ENCODE measurements at regions of chr15 and their contacts with region 1.

Region 1: GRCh38 chr15:72272213-72273002 is at the start of gene PARP6:
- DNase-seq: peak; percentile 99
- H3K4me3 ChIP-seq: peak within 1 kb of the TSS; percentile 72 to 90 (median 82)
- H3K27ac ChIP-seq: peak within 1 kb of the TSS; percentile 83 to 95 (median 90)
- H3K4me1 ChIP-seq: peaks cover 0 to 28% (median 22%) of the 10 kb centered on the region in 4 donors
- H3K27me3 ChIP-seq: no peaks in the 10 kb centered on the region
- CTCF ChIP-seq: peak; percentile 46 to 66 (median 60)
- EP300 ChIP-seq: peak in 1 of 4 donors; percentile 67
- POLR2A ChIP-seq: peak; percentile 13 to 17
- total RNA-seq, gene PARP6: 41.5 to 103 (median 60.0) TPM

Region 2: GRCh38 chr15:72117486-72118399 is 154.7 kb before region 1 on chr15 and contains the start of gene MYO9A:
- intact Hi-C with region 1: loop called (anchors 5 kb)
- DNase-seq: peak; percentile 98
- H3K4me3 ChIP-seq: peak within 1 kb of the TSS; percentile 71 to 93 (median 80)
- H3K27ac ChIP-seq: peak within 1 kb of the TSS; percentile 92 to 98 (median 94)
- H3K4me1 ChIP-seq: peaks cover 0 to 48% (median 39%) of the 10 kb centered on the region in 4 donors
- H3K27me3 ChIP-seq: no peaks in the 10 kb centered on the region
- CTCF ChIP-seq: no peak
- EP300 ChIP-seq: peak in 1 of 4 donors; percentile 10
- POLR2A ChIP-seq: peak in 1 of 2 donors; percentile 49
- total RNA-seq, gene MYO9A: 55.8 to 80.0 (median 62.8) TPM

Region 3: GRCh38 chr15:72199711-72200212 is 72.6 kb before region 1 on chr15:
- intact Hi-C with region 1: loop called (anchors 2 kb)
- DNase-seq: peak; percentile 85
- H3K4me3 ChIP-seq: no peak overlapping the region
- H3K27ac ChIP-seq: peak overlapping the region in 1 of 4 donors; percentile 41
- H3K4me1 ChIP-seq: peaks cover 0 to 25% (median 24%) of the 10 kb centered on the region in 4 donors
- H3K27me3 ChIP-seq: peaks cover 0 to 36% (median 16%) of the 10 kb centered on the region in 3 donors
- CTCF ChIP-seq: peak; percentile 57 to 91 (median 90)
- EP300 ChIP-seq: no peak
- POLR2A ChIP-seq: no peak

Region 4: GRCh38 chr15:72231066-72231846 is 41.2 kb before region 1 on chr15 and contains the start of gene PKM:
- intact Hi-C with region 1: loop called (anchors 2 kb)
- DNase-seq: peak; percentile 97
- H3K4me3 ChIP-seq: peak within 1 kb of the TSS; percentile 47 to 90 (median 68)
- H3K27ac ChIP-seq: peak within 1 kb of the TSS; percentile 92 to 99 (median 96)
- H3K4me1 ChIP-seq: peaks cover 0 to 48% (median 42%) of the 10 kb centered on the region in 4 donors
- H3K27me3 ChIP-seq: no peaks in the 10 kb centered on the region
- CTCF ChIP-seq: no peak
- EP300 ChIP-seq: no peak
- POLR2A ChIP-seq: peak; percentile 93 to 95
- total RNA-seq, gene PKM: 135 to 213 (median 200) TPM

Region 5: DNA sequence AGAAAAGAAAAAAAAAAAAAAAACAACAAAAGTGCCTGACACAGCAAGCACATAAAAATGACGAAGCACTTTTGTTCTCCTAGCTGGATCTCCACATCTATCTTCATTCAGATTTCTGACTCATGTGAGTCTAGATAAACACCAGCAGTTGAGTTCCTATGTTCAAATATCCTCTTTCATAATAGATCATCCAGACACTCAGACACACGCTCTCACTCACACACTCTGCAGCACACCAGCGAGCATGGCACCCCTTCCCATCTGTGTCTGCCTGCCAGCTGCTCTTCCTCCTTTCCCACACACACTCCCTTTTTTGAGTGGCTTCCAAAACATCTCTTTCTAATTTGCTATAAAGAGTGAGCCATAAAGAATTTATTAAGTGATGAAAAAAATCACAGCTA is 67.4 kb after region 1 on chr15:
- intact Hi-C with region 1: loop called (anchors 2 kb)
- DNase-seq: no peak
- H3K4me3 ChIP-seq: no peak overlapping the region
- H3K27ac ChIP-seq: peak overlapping the region; percentile 70 to 84 (median 78)
- H3K4me1 ChIP-seq: peaks cover 0 to 21% (median 19%) of the 10 kb centered on the region in 4 donors
- H3K27me3 ChIP-seq: no peaks in the 10 kb centered on the region
- CTCF ChIP-seq: no peak
- EP300 ChIP-seq: peak in 3 of 4 donors; percentile 40 to 51 (median 43)
- POLR2A ChIP-seq: no peak

Region 6: DNA sequence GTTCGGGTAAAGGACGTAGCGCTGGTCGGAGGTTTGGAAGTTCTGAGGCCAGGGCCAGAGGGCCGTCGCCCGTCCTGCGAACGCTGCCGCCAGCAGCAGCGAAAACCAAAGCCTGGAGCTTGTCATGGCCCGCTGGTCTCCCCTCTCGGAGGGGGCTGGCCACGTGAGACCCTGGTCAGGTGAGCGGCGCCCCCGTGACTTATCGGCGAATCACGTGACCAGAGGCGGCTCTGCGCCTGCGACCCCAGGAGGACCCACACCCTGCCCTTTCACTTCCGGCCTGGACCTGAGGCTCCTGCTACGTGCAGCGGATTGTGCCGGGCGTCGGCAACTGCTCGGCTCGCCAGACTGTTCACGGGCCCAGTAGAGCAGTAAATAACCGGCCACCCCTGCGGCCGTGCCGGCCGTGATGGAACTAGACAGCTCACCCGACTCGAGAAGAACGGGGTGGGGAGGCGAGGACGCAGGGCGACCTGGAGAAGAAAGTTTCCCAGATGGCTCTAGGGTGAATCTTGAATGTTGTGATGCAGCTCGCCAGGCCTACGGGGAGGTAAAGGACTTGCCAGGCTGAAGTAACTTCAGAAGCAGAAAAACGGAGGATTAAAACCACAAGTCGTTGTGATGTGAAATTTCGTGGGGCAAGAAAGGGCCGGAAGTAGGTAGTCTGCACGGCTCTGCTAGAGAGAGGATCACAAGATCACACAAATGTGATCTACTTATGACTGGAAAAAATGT is 103.6 kb after region 1 on chr15 and contains the start of gene HEXA:
- intact Hi-C with region 1: loop called (anchors 2 kb)
- DNase-seq: peak; percentile 99
- H3K4me3 ChIP-seq: peak within 1 kb of the TSS; percentile 70 to 85 (median 78)
- H3K27ac ChIP-seq: peak within 1 kb of the TSS; percentile 82 to 86 (median 84)
- H3K4me1 ChIP-seq: peaks cover 0 to 33% (median 24%) of the 10 kb centered on the region in 4 donors
- H3K27me3 ChIP-seq: no peaks in the 10 kb centered on the region
- CTCF ChIP-seq: no peak
- EP300 ChIP-seq: peak in 2 of 4 donors; percentile 52 to 79
- POLR2A ChIP-seq: peak; percentile 59 to 74
- total RNA-seq, gene HEXA: 56.0 to 80.0 (median 66.7) TPM

Region 7: DNA sequence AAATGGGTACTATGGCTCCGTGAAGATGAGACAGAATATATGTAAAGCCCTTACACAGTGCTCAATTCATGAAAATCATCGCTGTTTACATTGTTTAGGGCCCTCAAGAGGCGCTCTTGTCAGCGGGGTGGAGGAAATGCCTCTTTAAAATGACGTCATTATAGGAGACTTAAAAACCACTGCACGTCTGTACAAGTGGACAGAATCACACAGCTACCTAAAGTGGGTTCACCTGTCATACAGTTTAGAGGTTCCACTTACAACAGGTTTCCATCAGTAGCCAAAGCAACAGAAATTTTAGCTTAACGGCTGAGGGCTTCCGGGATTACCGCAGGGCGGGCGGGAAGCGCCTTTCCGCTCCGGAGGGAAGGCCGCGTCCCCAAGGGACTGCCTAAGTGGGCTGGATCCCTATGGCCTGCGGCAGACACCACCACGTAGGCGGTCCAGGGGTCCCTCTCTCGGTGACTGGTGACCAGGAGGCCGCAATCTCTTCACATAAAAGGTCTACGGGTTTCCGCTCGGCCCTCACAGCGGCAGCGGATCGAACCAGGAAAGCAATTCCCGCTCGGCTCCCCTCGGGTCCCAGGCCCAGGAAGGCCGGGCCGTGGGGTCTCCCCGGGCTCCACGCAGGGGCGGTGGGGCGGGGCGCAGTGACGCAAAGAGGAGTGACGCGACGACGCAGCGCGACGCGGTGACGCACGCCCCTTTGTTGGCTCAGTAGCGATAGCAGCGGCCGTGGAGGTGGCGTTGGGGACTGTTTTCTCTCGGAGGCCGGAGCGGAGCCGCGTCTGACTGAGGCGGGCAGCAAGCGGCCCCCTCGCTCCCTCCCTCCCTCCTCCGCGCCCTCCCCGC is 201.4 kb after region 1 on chr15 and contains the start of gene ARIH1:
- intact Hi-C with region 1: loop called (anchors 5 kb)
- DNase-seq: peak; percentile 99
- H3K4me3 ChIP-seq: peak within 1 kb of the TSS; percentile 58 to 91 (median 84)
- H3K27ac ChIP-seq: peak within 1 kb of the TSS; percentile 99
- H3K4me1 ChIP-seq: peaks cover 0 to 46% (median 43%) of the 10 kb centered on the region in 4 donors
- H3K27me3 ChIP-seq: no peaks in the 10 kb centered on the region
- CTCF ChIP-seq: no peak
- EP300 ChIP-seq: peak in 2 of 4 donors; percentile 69 to 85
- POLR2A ChIP-seq: peak; percentile 98 to 99
- total RNA-seq, gene ARIH1: 36.4 to 69.5 (median 45.2) TPM

Region 8: GRCh38 chr15:72704628-72705027 is 432.2 kb after region 1 on chr15:
- intact Hi-C with region 1: no loop called
- DNase-seq: no peak
- H3K4me3 ChIP-seq: no peak overlapping the region
- H3K27ac ChIP-seq: no peak overlapping the region
- H3K4me1 ChIP-seq: no peaks in the 10 kb centered on the region
- H3K27me3 ChIP-seq: no peaks in the 10 kb centered on the region
- CTCF ChIP-seq: no peak
- EP300 ChIP-seq: no peak
- POLR2A ChIP-seq: no peak